Activated CD4-positive, alpha-beta T cell treated with anti-CD3 and anti-CD28 coated beads for 36 hours (primary cell): ENCODE measurements at regions of chr9 and their contacts with region 1.

Region 1: DNA sequence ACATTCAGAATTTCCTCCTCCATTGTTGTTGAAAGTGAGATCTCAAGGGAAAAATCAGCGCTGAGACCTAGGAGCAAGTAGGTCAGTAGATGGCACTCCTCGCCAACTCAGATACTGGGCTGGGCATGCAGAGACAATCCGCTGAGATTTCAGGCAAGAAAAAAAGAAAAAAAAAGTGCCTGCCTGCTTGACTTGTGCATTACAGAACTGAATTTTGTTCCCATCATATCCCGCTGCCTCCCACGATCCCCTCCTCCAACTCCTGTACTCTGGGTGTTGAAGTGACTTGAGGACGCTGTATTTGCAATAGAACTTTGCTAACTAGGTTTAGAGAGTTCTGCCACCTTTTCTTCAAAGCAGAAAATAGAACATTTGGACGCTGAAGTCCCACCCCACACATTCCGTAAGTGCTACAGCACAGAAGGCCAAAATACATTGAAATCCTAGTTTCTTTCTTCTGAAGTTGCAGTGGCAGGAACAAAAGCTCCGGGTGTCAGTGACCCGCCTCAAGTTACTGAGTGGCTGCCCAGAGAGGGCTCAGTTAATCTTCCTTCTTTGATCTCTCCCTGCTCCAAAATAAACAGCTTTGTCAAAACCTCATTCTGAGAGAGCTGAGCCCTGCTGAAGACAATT is 265.8 kb downstream of the MLLT3 start:
- DNase-seq: peak; percentile 76
- ATAC-seq: peak; percentile 34
- H3K4me3 Mint-ChIP-seq: no peak overlapping the region
- H3K27ac Mint-ChIP-seq: peak overlapping the region; percentile 0
- H3K4me1 Mint-ChIP-seq: peaks cover 62% of the 10 kb centered on the region
- H3K27me3 Mint-ChIP-seq: no peaks in the 10 kb centered on the region

Region 2: DNA sequence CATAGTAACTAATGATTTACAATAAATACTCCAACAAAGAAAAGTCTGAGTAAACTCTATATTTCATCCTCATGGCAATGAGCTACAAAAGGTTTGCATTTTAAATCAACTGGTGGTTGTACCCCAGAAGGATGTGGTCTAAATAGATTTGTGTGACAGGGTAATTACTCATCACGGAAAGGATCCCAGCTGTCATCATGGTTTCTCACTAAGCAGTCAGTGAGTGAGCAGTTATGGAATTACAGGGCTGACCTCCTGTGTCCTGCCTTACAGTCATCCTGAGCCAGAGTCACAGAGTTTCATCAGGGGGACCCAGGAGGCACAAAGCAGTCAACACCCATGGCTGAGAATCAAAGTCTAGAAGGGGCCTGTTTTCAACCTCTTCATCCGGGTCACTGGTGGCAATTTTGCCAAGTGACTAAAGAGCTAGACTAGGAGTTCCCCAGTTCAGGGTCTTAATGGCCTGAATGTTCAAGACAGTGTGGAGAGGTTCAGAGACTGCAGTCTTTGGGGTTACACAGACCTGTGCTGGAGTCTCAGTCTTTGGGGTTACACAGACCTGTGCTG is 356.9 kb before region 1 on chr9:
- CTCF ChIA-PET with region 1: no interaction called
- POLR2A ChIA-PET with region 1: no interaction called
- intact Hi-C with region 1: loop called in 1 of 2 experiments (anchors 1 kb)
- DNase-seq: peak; percentile 81
- ATAC-seq: peak; percentile 94
- H3K4me3 Mint-ChIP-seq: peak overlapping the region; percentile 42
- H3K27ac Mint-ChIP-seq: peak overlapping the region; percentile 97
- H3K4me1 Mint-ChIP-seq: peaks cover 46% of the 10 kb centered on the region
- H3K27me3 Mint-ChIP-seq: no peaks in the 10 kb centered on the region

Region 3: GRCh38 chr9:20331095-20331685 is 25.3 kb before region 1 on chr9:
- CTCF ChIA-PET with region 1: interaction called, 3 read pairs
- POLR2A ChIA-PET with region 1: interaction called, 3 read pairs
- intact Hi-C with region 1: loop called in 1 of 2 experiments (anchors 2 kb)
- DNase-seq: no peak
- ATAC-seq: peak; percentile 93
- H3K4me3 Mint-ChIP-seq: no peak overlapping the region
- H3K27ac Mint-ChIP-seq: no peak overlapping the region
- H3K4me1 Mint-ChIP-seq: peaks cover 13% of the 10 kb centered on the region
- H3K27me3 Mint-ChIP-seq: no peaks in the 10 kb centered on the region

Region 4: DNA sequence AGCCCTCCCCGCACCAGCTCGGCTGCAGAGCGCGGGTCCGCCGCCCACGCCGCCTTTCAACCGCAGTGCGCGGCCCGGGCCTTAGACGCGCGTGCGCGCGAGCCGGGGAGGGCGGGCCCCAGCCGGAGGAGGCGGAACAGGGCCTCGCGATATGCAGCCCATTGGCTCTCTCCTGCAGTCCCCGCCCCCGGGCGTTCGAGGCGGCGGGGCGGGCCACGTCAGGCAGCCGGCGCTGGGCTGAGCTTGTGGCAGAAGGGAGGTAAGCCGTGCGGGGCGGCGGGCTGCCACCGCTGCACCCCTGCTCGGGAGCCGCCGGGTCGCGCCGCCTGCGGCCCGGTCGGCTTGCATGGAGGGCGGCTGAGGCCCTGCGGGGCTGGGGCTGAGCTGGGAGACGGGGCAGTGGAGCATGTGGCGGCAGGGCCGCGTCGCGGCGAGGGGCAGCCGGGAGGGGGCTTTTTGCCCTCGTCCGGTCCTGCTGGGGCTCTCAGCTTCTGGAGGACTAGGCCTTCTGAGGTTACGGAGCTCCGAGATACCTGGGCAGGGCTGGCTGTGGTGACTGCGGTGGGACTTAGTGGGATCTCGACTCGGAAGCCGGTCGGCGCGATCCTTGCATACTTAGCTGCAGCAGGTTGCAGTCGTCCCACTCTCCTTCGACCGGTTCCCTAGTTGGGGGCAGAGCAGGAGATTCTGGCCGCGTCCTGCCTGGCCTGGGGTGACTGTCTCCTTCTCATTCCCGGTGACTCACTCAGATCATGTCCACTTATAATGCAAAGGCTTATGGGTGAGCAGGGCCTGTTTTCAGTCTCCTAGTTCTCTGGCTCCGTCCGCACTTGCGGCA is 327.7 kb after region 1 on chr9 and contains the start of gene FOCAD:
- CTCF ChIA-PET with region 1: interaction called, 4 read pairs
- POLR2A ChIA-PET with region 1: interaction called, 4 read pairs
- intact Hi-C with region 1: loop called (anchors 1 kb)
- DNase-seq: peak; percentile 97
- ATAC-seq: peak; percentile 98
- H3K4me3 Mint-ChIP-seq: peak within 1 kb of the TSS; percentile 86
- H3K27ac Mint-ChIP-seq: peak within 1 kb of the TSS; percentile 75
- H3K4me1 Mint-ChIP-seq: peaks cover 27% of the 10 kb centered on the region
- H3K27me3 Mint-ChIP-seq: no peaks in the 10 kb centered on the region
- total RNA-seq, gene FOCAD: 32.5 to 34.3 TPM

Region 5: DNA sequence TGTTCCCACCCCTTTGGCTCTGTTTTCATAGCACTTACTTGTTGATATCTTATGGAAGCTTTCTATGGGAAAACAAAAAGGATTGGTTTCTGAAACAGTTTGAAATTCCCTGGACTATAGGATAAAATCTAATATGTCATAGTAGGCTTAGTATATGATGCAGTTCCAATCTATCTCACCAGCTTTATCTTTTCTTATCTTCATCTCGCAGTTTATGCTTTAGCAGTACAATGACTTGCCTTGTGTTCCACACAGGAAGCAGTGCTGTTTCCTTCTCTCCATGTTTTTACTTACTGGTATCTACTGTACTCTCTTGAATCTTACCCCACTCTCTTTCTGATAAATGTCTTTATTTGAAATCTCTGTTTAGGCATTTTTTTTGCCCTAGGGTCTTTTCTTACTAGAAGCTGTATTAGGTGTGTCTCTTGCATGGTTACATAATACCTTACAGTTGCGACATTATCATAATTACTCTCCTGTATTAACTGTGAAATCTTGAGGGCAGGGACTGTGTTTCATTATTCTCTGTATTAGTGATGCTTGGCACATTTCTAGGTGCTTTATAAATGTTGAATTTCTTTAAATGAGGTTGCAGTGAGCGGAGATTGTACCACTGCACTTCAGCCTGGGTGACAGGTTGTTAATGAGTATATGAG is 403.9 kb after region 1 on chr9:
- CTCF ChIA-PET with region 1: no interaction called
- POLR2A ChIA-PET with region 1: no interaction called
- intact Hi-C with region 1: no loop called
- DNase-seq: no peak
- ATAC-seq: no peak
- H3K4me3 Mint-ChIP-seq: no peak overlapping the region
- H3K27ac Mint-ChIP-seq: no peak overlapping the region
- H3K4me1 Mint-ChIP-seq: no peaks in the 10 kb centered on the region
- H3K27me3 Mint-ChIP-seq: no peaks in the 10 kb centered on the region

Region 6: GRCh38 chr9:21096172-21096900 is 739.8 kb after region 1 on chr9:
- CTCF ChIA-PET with region 1: no interaction called
- POLR2A ChIA-PET with region 1: no interaction called
- intact Hi-C with region 1: loop called in 1 of 2 experiments (anchors 5 kb)
- DNase-seq: peak; percentile 64
- ATAC-seq: peak; percentile 95
- H3K4me3 Mint-ChIP-seq: peak overlapping the region; percentile 58
- H3K27ac Mint-ChIP-seq: peak overlapping the region; percentile 87
- H3K4me1 Mint-ChIP-seq: peaks cover 31% of the 10 kb centered on the region
- H3K27me3 Mint-ChIP-seq: no peaks in the 10 kb centered on the region